ENCODE measurements at regions of chr9 and their contacts with region 1.

Region 1: GRCh38 chr9:30661925-30662324 is 1722.5 kb upstream of the ACO1 start:
- DNase-seq: no peak
- ATAC-seq: no peak
- H3K4me3 Mint-ChIP-seq: no peak overlapping the region
- H3K27ac Mint-ChIP-seq: no peak overlapping the region
- H3K4me1 Mint-ChIP-seq: no peaks in the 10 kb centered on the region
- H3K27me3 Mint-ChIP-seq: no peaks in the 10 kb centered on the region
- CTCF ChIP-seq: no peak

Region 2: DNA sequence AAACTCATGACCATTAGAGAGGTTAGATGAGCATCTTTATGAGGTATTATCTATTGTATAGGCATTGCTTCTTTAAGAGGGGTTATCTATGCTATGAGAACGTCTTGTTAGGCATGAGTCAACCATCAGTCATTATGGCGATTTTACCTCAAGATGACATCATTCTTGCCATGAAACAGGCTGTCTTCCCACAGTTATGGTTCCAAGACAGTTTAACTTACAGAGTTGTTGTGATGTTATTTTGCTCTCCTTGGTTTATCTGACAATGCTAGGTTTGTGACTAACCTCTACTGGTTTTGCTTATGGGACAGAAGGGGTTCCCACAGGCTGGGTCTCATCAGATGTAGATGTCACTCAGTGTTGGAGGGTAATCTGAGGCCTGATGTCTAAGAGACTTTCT is 142.2 kb before region 1 on chr9:
- CTCF ChIA-PET with region 1: no interaction called
- POLR2A ChIA-PET with region 1: no interaction called
- intact Hi-C with region 1: no loop called
- DNase-seq: no peak
- ATAC-seq: no peak
- H3K4me3 Mint-ChIP-seq: no peak overlapping the region
- H3K27ac Mint-ChIP-seq: no peak overlapping the region
- H3K4me1 Mint-ChIP-seq: no peaks in the 10 kb centered on the region
- H3K27me3 Mint-ChIP-seq: no peaks in the 10 kb centered on the region
- CTCF ChIP-seq: no peak

Region 3: DNA sequence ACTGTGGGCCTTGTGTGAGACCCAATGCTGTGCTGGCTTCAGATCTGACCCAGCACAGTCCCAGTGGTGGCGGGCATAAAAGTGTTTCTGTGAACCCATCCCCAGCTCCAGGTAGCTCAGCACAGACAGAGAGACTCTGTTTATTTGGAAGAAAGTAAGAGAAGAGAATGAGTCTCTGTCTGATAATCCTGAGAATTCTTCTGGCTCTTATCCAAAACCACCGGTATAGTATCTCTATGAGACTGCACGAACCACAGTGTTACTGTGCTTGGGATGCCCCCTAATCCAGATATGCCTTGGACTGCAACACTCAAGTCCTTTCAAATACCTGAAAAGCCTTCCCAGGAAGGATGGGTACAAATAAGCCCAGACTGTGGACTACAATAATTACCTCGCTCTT is 61.7 kb after region 1 on chr9:
- CTCF ChIA-PET with region 1: no interaction called
- POLR2A ChIA-PET with region 1: no interaction called
- intact Hi-C with region 1: loop called (anchors 10 kb)
- DNase-seq: no peak
- ATAC-seq: no peak
- H3K4me3 Mint-ChIP-seq: no peak overlapping the region
- H3K27ac Mint-ChIP-seq: no peak overlapping the region
- H3K4me1 Mint-ChIP-seq: no peaks in the 10 kb centered on the region
- H3K27me3 Mint-ChIP-seq: no peaks in the 10 kb centered on the region
- CTCF ChIP-seq: no peak